Heart right ventricle (tissue), 16 donors: ENCODE measurements at regions of chrX and their contacts with region 1.

Region 1: GRCh38 chrX:23907498-23908218 is at the starts of genes APOO and CXorf58:
- DNase-seq: peak; percentile 89 to 91
- ATAC-seq: peak; percentile 96 to 99 (median 98)
- H3K4me3 ChIP-seq: peak within 1 kb of the TSS; percentile 50 to 75 (median 65)
- H3K27ac ChIP-seq: peak within 1 kb of the TSS; percentile 78 to 95 (median 88)
- H3K4me1 ChIP-seq: peaks cover 0 to 16% (median 2%) of the 10 kb centered on the region in 9 donors
- H3K27me3 ChIP-seq: peaks cover 0 to 26% (median 0%) of the 10 kb centered on the region in 7 donors
- CTCF ChIP-seq: peak; percentile 49 to 89 (median 74)
- total RNA-seq, gene APOO: 73.5 to 132 (median 103) TPM
- total RNA-seq, gene CXorf58: 0.13 to 1.1 (median 0.33) TPM in 8 of 10 donors, not detected in the others

Region 2: GRCh38 chrX:23694606-23695005 is 213.1 kb before region 1 on chrX:
- intact Hi-C with region 1: loop called (anchors 2 to 10 kb)
- DNase-seq: peak in 1 of 2 donors; percentile 49
- ATAC-seq: peak in 3 of 8 donors; percentile 48 to 58 (median 53)
- H3K4me3 ChIP-seq: no peak overlapping the region
- H3K27ac ChIP-seq: no peak overlapping the region
- H3K4me1 ChIP-seq: peaks cover 0 to 3% (median 0%) of the 10 kb centered on the region in 9 donors
- H3K27me3 ChIP-seq: peaks cover 0 to 7% (median 0%) of the 10 kb centered on the region in 7 donors
- CTCF ChIP-seq: peak; percentile 16 to 66 (median 52)

Region 3: DNA sequence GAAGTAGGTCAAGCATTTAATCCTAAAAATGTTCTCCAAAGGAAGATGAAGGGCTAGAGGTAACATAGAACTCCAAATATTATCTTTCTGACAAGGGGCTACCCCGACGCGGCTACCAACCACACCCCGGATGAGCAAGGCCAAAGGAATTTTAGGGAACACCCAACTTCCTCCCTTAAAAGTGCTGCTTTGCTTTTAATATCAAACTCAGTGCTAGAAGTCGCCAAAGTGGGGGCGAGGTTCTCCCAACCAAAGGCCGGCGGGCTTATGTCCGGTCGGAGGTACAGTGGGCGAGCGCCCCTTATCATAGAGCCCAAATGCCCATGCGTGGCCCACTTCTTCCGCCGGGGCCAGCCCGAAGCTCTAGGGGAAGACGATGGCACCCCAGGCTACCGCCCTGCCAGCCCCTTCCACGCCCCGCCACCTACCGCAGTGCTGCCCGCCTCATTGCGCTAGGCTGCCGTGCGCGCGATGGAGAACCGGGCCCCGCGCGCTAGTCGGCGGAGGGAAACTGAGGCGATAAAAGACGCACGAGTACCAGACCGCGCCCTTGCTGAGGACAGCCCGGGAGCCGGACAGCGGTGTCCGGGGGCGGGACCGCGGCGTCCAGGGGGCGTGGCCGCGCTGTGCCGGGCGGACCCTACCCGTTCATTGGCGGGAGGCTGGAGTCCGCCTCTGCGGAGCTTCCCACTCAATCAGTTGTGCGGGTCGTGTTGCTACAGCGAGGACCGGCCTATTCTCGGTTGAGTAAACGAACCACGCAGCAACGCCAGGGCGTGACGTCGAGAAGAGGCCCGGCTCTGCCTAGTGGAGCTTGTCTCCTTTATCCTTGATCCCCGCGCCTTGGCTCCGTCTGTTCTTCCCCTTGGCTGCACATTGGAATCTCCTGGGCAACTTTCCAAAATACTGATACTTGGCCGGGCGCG is 164.7 kb before region 1 on chrX and contains the start of gene ACOT9:
- intact Hi-C with region 1: loop called in 1 of 10 experiments (anchors 2 kb)
- DNase-seq: peak; percentile 91 to 93
- ATAC-seq: peak; percentile 97 to 99 (median 98)
- H3K4me3 ChIP-seq: peak within 1 kb of the TSS; percentile 55 to 94 (median 78)
- H3K27ac ChIP-seq: peak within 1 kb of the TSS; percentile 94 to 99 (median 96)
- H3K4me1 ChIP-seq: peaks cover 0 to 14% (median 9%) of the 10 kb centered on the region in 9 donors
- H3K27me3 ChIP-seq: no peaks in the 10 kb centered on the region
- CTCF ChIP-seq: no peak
- total RNA-seq, gene ACOT9: 44.8 to 79.7 (median 64.6) TPM

Region 4: DNA sequence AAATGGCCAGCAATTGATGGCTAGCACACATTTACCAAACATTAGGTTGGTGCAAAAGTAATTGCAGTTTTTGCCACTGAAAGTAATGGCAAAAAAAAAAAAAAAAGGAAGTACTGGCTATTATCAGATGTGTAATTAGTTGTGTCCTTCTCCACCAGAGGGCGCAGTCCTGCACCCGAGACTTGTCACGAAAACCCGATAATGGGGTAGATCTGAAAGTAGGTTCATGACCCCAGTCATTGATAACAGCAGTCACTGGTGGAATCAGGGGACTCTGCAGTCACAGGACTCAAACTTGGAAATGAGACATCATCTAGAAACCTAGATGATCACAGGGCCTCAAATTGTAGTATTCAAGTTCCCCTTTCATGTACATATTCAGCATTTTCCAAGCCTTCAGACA is 151.5 kb before region 1 on chrX:
- intact Hi-C with region 1: loop called in 6 of 10 experiments (anchors 5 to 10 kb)
- DNase-seq: peak; percentile 22 to 44
- ATAC-seq: peak in 1 of 8 donors; percentile 31
- H3K4me3 ChIP-seq: no peak overlapping the region
- H3K27ac ChIP-seq: no peak overlapping the region
- H3K4me1 ChIP-seq: peaks cover 0 to 5% (median 0%) of the 10 kb centered on the region in 9 donors
- H3K27me3 ChIP-seq: no peaks in the 10 kb centered on the region
- CTCF ChIP-seq: peak in 8 of 9 donors; percentile 30 to 62 (median 54)

Region 5: GRCh38 chrX:23937100-23937499 is 29.4 kb after region 1 on chrX:
- intact Hi-C with region 1: no loop called
- DNase-seq: no peak
- ATAC-seq: no peak
- H3K4me3 ChIP-seq: no peak overlapping the region
- H3K27ac ChIP-seq: no peak overlapping the region
- H3K4me1 ChIP-seq: no peaks in the 10 kb centered on the region
- H3K27me3 ChIP-seq: peaks cover 0 to 60% (median 0%) of the 10 kb centered on the region in 7 donors
- CTCF ChIP-seq: no peak

Region 6: GRCh38 chrX:24024819-24025740 is 117.4 kb after region 1 on chrX:
- intact Hi-C with region 1: loop called in 6 of 10 experiments (anchors 5 to 10 kb)
- DNase-seq: peak; percentile 88 to 89
- ATAC-seq: peak; percentile 94 to 98 (median 95)
- H3K4me3 ChIP-seq: peak overlapping the region; percentile 66 to 94 (median 80)
- H3K27ac ChIP-seq: peak overlapping the region; percentile 93 to 97 (median 96)
- H3K4me1 ChIP-seq: peaks cover 0 to 15% (median 4%) of the 10 kb centered on the region in 9 donors
- H3K27me3 ChIP-seq: peaks cover 0 to 88% (median 0%) of the 10 kb centered on the region in 7 donors
- CTCF ChIP-seq: peak in 6 of 9 donors; percentile 17 to 50 (median 34)

Region 7: DNA sequence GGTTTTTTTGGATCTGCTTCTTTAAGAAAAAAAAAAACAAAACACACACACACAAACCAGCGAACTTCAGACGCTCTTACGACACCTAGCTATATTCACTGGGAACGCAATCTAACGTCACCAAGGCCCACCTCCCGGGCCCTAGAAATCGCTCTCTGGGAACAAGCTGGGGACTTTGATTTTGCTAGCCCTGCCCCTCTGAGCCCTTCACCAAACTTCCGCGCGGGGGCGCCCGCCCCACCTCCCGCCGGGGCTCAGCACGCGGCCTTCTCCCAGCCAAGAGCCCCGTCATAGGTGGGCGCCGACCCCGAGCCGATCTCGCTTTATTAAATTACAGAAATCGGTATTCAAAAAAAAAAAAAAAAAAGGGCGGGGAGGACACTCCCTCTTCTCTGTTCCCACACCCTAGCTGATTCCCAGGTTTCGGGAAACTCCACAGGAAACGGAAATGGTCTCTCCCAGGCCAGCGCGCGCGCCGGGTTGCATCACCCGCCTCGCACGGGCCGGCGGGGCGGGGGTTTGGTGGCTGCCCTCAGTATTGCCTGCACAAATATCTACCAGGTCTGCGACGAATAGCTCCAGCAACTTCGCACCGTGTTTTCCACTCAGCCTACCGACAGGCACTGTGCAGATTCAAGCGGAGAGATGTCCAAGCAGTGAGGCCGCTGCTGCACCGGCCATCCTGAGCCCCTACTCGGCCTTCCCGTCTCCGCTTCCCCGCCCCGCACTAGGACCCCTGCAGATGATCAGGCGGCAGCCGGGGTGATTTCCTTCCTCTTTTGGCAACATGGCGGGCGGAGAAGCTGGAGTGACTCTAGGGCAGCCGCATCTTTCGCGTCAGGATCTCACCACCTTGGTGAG is 146.8 kb after region 1 on chrX and contains the start of gene EIF2S3:
- intact Hi-C with region 1: loop called in 6 of 10 experiments (anchors 1 to 10 kb)
- DNase-seq: peak; percentile 80 to 88
- ATAC-seq: peak; percentile 96 to 99 (median 98)
- H3K4me3 ChIP-seq: peak within 1 kb of the TSS in 4 of 10 donors; percentile 77 to 89 (median 84)
- H3K27ac ChIP-seq: peak within 1 kb of the TSS; percentile 83 to 96 (median 92)
- H3K4me1 ChIP-seq: peaks cover 0 to 11% (median 0%) of the 10 kb centered on the region in 9 donors
- H3K27me3 ChIP-seq: peaks cover 0 to 24% (median 0%) of the 10 kb centered on the region in 7 donors
- CTCF ChIP-seq: peak; percentile 35 to 83 (median 74)
- total RNA-seq, gene EIF2S3: 68.7 to 104 (median 80.6) TPM

Region 8: GRCh38 chrX:24150051-24150790 is 242.6 kb after region 1 on chrX:
- intact Hi-C with region 1: loop called in 1 of 10 experiments (anchors 5 kb)
- DNase-seq: peak; percentile 82 to 85
- ATAC-seq: peak; percentile 85 to 95 (median 90)
- H3K4me3 ChIP-seq: peak overlapping the region; percentile 59 to 91 (median 74)
- H3K27ac ChIP-seq: peak overlapping the region; percentile 87 to 100 (median 98)
- H3K4me1 ChIP-seq: peaks cover 2 to 76% (median 57%) of the 10 kb centered on the region in 9 donors
- H3K27me3 ChIP-seq: no peaks in the 10 kb centered on the region
- CTCF ChIP-seq: peak in 8 of 9 donors; percentile 5 to 65 (median 52)